ENCODE measurements at regions of chr20 and their contacts with region 1.

Region 1: GRCh38 chr20:22691369-22692118 is 107.2 kb upstream of the FOXA2 start:
- DNase-seq: peak; percentile 82
- H3K4me3 ChIP-seq: peak overlapping the region in 1 of 3 experiments; percentile 4
- H3K27ac ChIP-seq: no peak overlapping the region
- H3K4me1 ChIP-seq: peaks cover 6% of the 10 kb centered on the region
- H3K27me3 ChIP-seq: no peaks in the 10 kb centered on the region
- CTCF ChIP-seq: peak; percentile 83 to 87
- POLR2A ChIP-seq: no peak

Region 2: DNA sequence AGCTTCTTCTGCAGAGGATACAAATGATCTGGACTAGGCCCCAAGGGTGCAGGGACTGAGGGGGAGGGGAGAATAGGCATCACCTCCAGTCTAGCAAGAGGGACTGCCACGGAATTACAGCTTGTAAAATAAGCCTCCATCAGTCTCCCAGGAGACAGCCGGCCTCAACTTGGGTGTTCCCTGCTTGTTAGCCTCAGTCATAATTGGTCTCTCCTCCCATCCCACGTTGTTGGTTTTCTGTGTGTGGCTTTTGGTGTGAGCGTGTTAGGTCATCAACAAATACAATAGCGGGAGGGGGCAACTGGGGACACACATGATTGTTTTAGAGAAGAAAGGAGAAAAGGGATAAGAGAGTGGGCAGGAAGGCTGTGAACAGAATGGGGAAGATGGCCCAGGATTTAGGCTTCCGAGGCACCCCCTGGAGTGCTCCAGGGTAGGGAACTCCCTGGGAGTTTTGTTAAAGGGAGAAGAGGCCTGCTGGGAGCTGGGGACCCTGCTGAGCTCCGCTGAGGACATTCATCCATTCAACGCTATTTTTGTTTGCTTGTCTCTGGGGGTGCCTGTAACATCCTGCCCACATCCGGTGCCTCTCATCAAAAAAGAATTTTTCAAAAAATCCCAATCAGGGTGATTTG is 116.3 kb before region 1 on chr20:
- CTCF ChIA-PET with region 1: no interaction called
- POLR2A ChIA-PET with region 1: no interaction called
- dilution Hi-C with region 1: no loop called
- intact Hi-C with region 1: no loop called
- DNase-seq: no peak
- H3K4me3 ChIP-seq: no peak overlapping the region
- H3K27ac ChIP-seq: no peak overlapping the region
- H3K4me1 ChIP-seq: no peaks in the 10 kb centered on the region
- H3K27me3 ChIP-seq: peaks cover 90 to 96% of the 10 kb centered on the region in 2 experiments
- CTCF ChIP-seq: no peak
- POLR2A ChIP-seq: no peak

Region 3: GRCh38 chr20:22611636-22612035 is 79.9 kb before region 1 on chr20:
- CTCF ChIA-PET with region 1: no interaction called
- POLR2A ChIA-PET with region 1: no interaction called
- dilution Hi-C with region 1: no loop called
- intact Hi-C with region 1: no loop called
- DNase-seq: no peak
- H3K4me3 ChIP-seq: no peak overlapping the region
- H3K27ac ChIP-seq: no peak overlapping the region
- H3K4me1 ChIP-seq: no peaks in the 10 kb centered on the region
- H3K27me3 ChIP-seq: no peaks in the 10 kb centered on the region
- CTCF ChIP-seq: no peak
- POLR2A ChIP-seq: no peak

Region 4: GRCh38 chr20:22716821-22717351 is 25.3 kb after region 1 on chr20:
- CTCF ChIA-PET with region 1: interaction called, 51 read pairs
- POLR2A ChIA-PET with region 1: no interaction called
- dilution Hi-C with region 1: no loop called
- intact Hi-C with region 1: no loop called
- DNase-seq: peak; percentile 68
- H3K4me3 ChIP-seq: no peak overlapping the region
- H3K27ac ChIP-seq: peak overlapping the region; percentile 59
- H3K4me1 ChIP-seq: peaks cover 39% of the 10 kb centered on the region
- H3K27me3 ChIP-seq: no peaks in the 10 kb centered on the region
- CTCF ChIP-seq: no peak
- POLR2A ChIP-seq: no peak

Region 5: GRCh38 chr20:22846863-22847262 is 155.3 kb after region 1 on chr20:
- CTCF ChIA-PET with region 1: interaction called, 59 read pairs
- POLR2A ChIA-PET with region 1: no interaction called
- dilution Hi-C with region 1: no loop called
- intact Hi-C with region 1: no loop called
- DNase-seq: no peak
- H3K4me3 ChIP-seq: no peak overlapping the region
- H3K27ac ChIP-seq: no peak overlapping the region
- H3K4me1 ChIP-seq: peaks cover 4% of the 10 kb centered on the region
- H3K27me3 ChIP-seq: peaks cover 1 to 5% of the 10 kb centered on the region in 2 experiments
- CTCF ChIP-seq: no peak
- POLR2A ChIP-seq: no peak

Region 6: DNA sequence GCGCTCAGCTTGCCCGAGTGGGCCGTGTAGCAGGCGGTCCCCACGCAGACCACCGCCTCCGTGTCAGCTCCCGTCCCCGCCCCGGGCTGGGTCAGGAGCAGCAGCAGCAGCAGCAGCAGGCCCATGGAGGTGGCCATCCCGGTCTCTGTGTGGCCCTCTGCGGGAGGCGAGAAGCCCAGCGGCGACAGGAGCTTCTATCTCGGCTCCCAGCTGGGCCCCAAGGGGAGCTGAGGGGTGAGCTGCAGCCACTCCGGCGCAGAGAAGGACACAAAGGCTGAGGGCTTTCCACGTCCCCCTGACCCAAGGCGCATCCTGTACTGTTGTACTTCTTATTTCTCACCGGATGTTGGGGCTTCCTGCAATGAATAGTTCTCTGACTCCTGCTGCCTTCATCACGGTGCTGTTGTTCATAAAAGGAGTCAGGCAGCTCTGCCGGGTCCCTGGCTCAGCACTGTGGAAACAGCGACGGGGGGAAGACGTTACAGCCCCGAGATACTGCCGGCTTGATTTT is 394.6 kb after region 1 on chr20 and contains the start of gene CD93:
- CTCF ChIA-PET with region 1: interaction called, 14 read pairs
- POLR2A ChIA-PET with region 1: no interaction called
- dilution Hi-C with region 1: no loop called
- intact Hi-C with region 1: no loop called
- DNase-seq: peak; percentile 95
- H3K4me3 ChIP-seq: peak within 1 kb of the TSS; percentile 30 to 93 (median 82)
- H3K27ac ChIP-seq: peak within 1 kb of the TSS; percentile 98
- H3K4me1 ChIP-seq: peaks cover 53% of the 10 kb centered on the region
- H3K27me3 ChIP-seq: no peaks in the 10 kb centered on the region
- CTCF ChIP-seq: peak in 1 of 2 donors; percentile 14
- POLR2A ChIP-seq: peak; percentile 68
- total RNA-seq, gene CD93: 346 and 413 TPM in 2 replicates

Region 7: DNA sequence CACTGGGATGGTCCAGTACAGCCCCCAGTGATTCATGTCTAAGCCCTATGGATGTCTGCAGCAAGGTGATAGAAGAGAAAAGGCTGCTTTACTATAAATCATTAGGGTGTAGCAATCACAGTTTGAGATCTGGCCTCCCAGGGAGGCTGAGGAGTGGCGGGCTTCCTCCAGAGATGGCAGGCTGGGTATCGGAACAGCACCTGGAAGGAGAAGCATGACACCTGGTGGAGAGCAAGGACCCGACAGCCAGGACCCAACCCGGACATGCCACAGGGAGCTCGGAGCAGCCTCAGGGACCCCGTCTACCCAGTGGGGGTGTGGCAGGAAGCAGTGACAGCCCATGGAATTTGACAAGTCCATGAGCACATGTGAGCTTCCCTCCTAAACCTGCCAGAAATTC is 509.4 kb after region 1 on chr20:
- CTCF ChIA-PET with region 1: interaction called, 40 read pairs
- POLR2A ChIA-PET with region 1: no interaction called
- dilution Hi-C with region 1: no loop called
- intact Hi-C with region 1: no loop called
- DNase-seq: no peak
- H3K4me3 ChIP-seq: no peak overlapping the region
- H3K27ac ChIP-seq: no peak overlapping the region
- H3K4me1 ChIP-seq: no peaks in the 10 kb centered on the region
- H3K27me3 ChIP-seq: no peaks in the 10 kb centered on the region
- CTCF ChIP-seq: peak; percentile 42 to 54
- POLR2A ChIP-seq: no peak

Region 8: GRCh38 chr20:23320317-23320716 is 628.8 kb after region 1 on chr20:
- CTCF ChIA-PET with region 1: interaction called, 13 read pairs
- POLR2A ChIA-PET with region 1: interaction called, 3 read pairs
- dilution Hi-C with region 1: no loop called
- intact Hi-C with region 1: no loop called
- DNase-seq: peak; percentile 21
- H3K4me3 ChIP-seq: no peak overlapping the region
- H3K27ac ChIP-seq: no peak overlapping the region
- H3K4me1 ChIP-seq: peaks cover 10% of the 10 kb centered on the region
- H3K27me3 ChIP-seq: peaks cover 0 to 5% of the 10 kb centered on the region in 2 experiments
- CTCF ChIP-seq: peak; percentile 37 to 50
- POLR2A ChIP-seq: no peak

Measured in endothelial cell of umbilical vein (primary cell).